Sigmoid colon (tissue), 7 donors: ENCODE measurements at regions of chr12 and their contacts with region 1.

Region 1: DNA sequence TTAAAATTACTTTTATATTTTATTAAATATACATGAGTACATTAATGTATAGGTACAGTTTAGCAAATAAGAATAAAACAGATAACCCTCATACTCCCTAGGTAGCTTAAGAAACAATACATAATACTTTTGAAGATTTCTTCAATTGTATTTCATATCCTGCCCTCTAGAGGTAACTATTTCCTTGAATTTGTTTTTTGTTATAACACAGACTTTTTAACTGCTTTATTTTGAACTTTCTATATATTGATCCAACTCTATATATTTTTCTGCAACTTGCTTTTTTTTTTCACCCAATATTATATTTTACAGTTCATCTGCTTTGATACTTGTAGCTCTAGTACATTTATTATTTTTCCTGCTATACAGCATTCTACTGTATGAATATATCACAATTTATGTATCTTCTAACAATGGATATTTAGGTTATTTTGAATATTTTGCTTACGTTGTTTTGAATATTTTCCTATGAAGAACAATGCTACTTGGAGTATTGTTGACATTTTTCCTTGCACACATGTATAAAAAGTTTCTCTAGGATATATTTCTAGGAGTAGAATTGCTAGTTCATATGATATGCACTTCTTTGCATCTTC is 72.8 kb upstream of the ABCD2 start:
- DNase-seq: no peak
- H3K4me3 ChIP-seq: no peak overlapping the region
- H3K27ac ChIP-seq: no peak overlapping the region
- H3K4me1 ChIP-seq: no peaks in the 10 kb centered on the region
- H3K27me3 ChIP-seq: no peaks in the 10 kb centered on the region
- CTCF ChIP-seq: peak in 2 of 4 experiments; percentile 6 to 39
- EP300 ChIP-seq: no peak
- POLR2A ChIP-seq: no peak

Region 2: DNA sequence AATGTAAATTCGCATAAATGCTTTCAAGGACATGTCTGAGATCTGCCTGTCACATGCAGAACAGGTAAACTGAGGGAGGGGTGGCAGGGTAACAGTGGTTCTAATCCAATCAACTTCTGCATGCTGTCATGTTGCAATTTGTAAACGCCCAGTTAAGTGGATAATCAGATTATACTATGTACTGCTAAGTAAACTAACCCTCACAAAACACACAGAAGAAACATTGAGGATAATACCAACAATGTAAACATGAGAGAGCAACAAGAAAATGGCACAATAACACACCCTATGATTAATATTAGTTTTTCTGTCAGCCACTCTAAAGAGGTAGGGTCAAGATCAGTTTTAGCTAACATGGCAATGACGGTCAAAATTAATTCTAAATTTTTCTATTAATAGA is 373.2 kb before region 1 on chr12:
- intact Hi-C with region 1: loop called (anchors 5 kb)
- DNase-seq: no peak
- H3K4me3 ChIP-seq: no peak overlapping the region
- H3K27ac ChIP-seq: no peak overlapping the region
- H3K4me1 ChIP-seq: no peaks in the 10 kb centered on the region
- H3K27me3 ChIP-seq: no peaks in the 10 kb centered on the region
- CTCF ChIP-seq: no peak
- EP300 ChIP-seq: no peak
- POLR2A ChIP-seq: no peak